MCF 10A (cell line): ENCODE measurements at regions of chr1 and their contacts with region 1.

Region 1: GRCh38 chr1:32013386-32014198 is at the start of gene KHDRBS1:
- DNase-seq: peak; percentile 97
- H3K4me3 Mint-ChIP-seq: peak within 1 kb of the TSS; percentile 98
- H3K27ac Mint-ChIP-seq: peak within 1 kb of the TSS; percentile 95
- H3K4me1 Mint-ChIP-seq: peaks cover 26% of the 10 kb centered on the region
- H3K27me3 Mint-ChIP-seq: no peaks in the 10 kb centered on the region
- CTCF ChIP-seq: no peak
- total RNA-seq, gene KHDRBS1: 106 and 107 TPM in 2 replicates

Region 2: GRCh38 chr1:31955917-31956736 is 57.5 kb before region 1 on chr1:
- CTCF ChIA-PET with region 1: no interaction called
- POLR2A ChIA-PET with region 1: interaction called, 11 read pairs
- intact Hi-C with region 1: no loop called
- DNase-seq: peak; percentile 99
- H3K4me3 Mint-ChIP-seq: peak overlapping the region; percentile 39
- H3K27ac Mint-ChIP-seq: peak overlapping the region; percentile 100
- H3K4me1 Mint-ChIP-seq: peaks cover 35% of the 10 kb centered on the region
- H3K27me3 Mint-ChIP-seq: no peaks in the 10 kb centered on the region
- CTCF ChIP-seq: no peak

Region 3: DNA sequence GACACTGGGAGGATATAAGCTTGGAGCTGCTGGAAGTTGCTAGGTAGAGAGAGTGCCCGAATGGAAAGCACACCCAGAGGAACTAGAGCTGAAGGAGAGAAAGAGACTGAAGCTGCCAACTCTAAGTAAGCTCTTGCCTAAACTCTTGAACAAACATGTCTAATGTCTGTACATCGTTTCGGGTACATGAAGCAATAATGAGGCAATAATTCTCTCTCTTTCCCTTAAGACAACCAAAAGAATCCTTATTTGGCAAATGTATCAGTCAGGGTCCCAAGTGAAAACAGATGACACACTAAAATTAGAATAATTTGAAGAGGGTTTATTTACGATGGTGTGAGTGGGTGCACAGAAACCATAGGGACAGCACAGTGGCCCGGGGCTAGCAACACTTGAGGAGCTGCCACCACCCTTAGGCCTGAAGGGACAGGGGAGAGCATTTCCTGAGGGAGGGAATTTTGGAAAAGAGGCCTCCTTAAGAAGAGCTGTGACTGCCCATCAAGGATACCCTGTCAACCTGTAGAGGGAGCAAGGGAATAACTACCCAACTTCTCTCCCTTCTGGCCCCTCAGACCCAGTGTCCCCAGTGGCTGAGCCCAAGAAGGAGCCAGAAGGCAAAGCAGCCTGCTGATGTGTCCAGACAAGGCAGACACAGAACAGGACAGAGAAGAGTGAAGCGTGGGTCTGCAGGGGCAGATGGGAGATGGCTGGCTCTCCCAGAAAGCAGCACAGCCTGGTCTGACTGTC is 36.0 kb before region 1 on chr1:
- CTCF ChIA-PET with region 1: interaction called, 3 read pairs
- POLR2A ChIA-PET with region 1: interaction called, 22 read pairs
- intact Hi-C with region 1: no loop called
- DNase-seq: peak; percentile 61
- H3K4me3 Mint-ChIP-seq: no peak overlapping the region
- H3K27ac Mint-ChIP-seq: peak overlapping the region; percentile 65
- H3K4me1 Mint-ChIP-seq: peaks cover 18% of the 10 kb centered on the region
- H3K27me3 Mint-ChIP-seq: no peaks in the 10 kb centered on the region
- CTCF ChIP-seq: no peak

Region 4: GRCh38 chr1:31984419-31985347 is 28.9 kb before region 1 on chr1:
- CTCF ChIA-PET with region 1: no interaction called
- POLR2A ChIA-PET with region 1: interaction called, 20 read pairs
- intact Hi-C with region 1: no loop called
- DNase-seq: peak; percentile 23
- H3K4me3 Mint-ChIP-seq: no peak overlapping the region
- H3K27ac Mint-ChIP-seq: peak overlapping the region; percentile 87
- H3K4me1 Mint-ChIP-seq: peaks cover 10% of the 10 kb centered on the region
- H3K27me3 Mint-ChIP-seq: no peaks in the 10 kb centered on the region
- CTCF ChIP-seq: no peak

Region 5: GRCh38 chr1:31989964-31990363 is 23.6 kb before region 1 on chr1:
- CTCF ChIA-PET with region 1: no interaction called
- POLR2A ChIA-PET with region 1: interaction called, 20 read pairs
- intact Hi-C with region 1: no loop called
- DNase-seq: no peak
- H3K4me3 Mint-ChIP-seq: no peak overlapping the region
- H3K27ac Mint-ChIP-seq: no peak overlapping the region
- H3K4me1 Mint-ChIP-seq: peaks cover 6% of the 10 kb centered on the region
- H3K27me3 Mint-ChIP-seq: no peaks in the 10 kb centered on the region
- CTCF ChIP-seq: no peak